Activated CD4-positive, alpha-beta memory T cell treated with anti-CD3 and anti-CD28 coated beads for 36 hours (primary cell): ENCODE measurements at regions of chr14 and their contacts with region 1.

Region 1: DNA sequence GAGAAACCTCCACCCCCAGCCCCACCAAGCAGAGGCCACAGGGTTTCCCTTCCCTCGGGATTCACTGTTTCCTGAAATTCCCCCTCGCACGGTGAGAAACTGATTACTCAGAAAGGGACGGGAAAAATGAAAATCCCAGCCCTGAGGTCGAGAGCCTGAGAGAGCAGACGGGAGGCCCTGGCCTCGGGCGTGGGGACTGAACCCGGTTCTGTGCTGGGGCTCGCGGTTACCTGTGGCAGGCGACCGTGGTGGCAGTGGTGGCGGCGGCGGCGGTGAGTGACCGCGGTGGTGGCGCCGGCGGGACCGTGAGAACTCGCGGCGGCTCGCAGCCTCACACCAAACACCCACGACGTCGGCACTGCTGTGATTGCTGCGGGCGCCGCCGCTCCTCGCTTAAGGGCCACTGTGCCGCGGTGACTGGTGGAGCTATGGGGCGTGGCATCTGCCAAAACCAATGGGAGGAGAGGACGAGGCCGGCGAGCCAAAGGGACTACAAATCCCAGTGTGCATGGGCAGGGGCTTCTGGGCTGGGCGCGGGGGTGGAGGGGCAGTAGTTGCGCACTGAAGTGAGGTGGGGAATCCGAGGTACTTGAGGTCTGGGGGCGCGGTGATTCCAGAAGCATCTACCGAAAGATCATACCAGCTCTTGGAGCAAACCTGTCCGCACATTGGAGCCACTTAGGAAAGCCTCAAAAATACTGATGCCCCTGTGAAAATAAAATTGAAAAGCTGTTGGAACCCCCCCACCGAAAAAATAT is at the start of gene LGMN:
- DNase-seq: peak; percentile 89
- H3K4me3 Mint-ChIP-seq: peak within 1 kb of the TSS; percentile 74
- H3K27ac Mint-ChIP-seq: no peak within 1 kb of the TSS
- H3K4me1 Mint-ChIP-seq: peaks cover 36% of the 10 kb centered on the region
- H3K27me3 Mint-ChIP-seq: peaks cover 48% of the 10 kb centered on the region
- total RNA-seq, gene LGMN: 9.2 to 10.2 TPM

Region 2: DNA sequence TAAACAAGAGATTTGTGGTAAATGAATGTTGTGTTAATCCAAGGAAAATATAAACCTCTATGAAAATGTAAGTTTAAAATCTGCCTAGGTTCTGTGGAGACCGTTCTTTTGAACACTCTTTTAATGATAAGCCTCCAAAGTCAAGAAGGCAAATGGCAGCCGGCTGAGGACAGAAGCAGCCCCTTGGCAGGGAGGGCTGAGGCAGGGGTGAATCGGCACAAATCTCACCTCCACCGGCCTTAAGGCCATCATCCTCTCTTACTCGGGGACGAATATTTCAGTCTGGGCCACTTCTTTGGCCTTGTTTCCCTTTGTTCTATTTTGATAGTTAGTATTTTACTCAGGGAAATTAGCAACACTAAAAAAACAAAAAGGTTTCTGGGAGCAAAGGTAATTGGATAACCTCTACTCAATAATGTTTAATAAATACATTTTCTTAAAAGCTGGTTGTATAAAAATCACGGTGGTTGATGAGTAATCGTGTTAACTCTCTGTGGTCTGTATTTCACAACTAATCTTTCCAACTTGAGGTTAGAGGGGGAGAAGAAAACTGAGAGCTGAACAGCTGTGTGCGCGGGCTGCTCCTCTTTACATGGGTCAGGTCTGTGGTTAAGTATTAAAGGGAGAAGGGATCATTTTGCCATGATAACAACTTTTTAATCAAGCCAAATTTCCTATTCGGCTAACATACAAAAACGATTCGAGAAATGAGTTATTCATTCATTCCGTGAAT is 18.6 kb before region 1 on chr14:
- CTCF ChIA-PET with region 1: interaction called, 3 read pairs
- POLR2A ChIA-PET with region 1: no interaction called
- intact Hi-C with region 1: loop called (anchors 2 kb)
- DNase-seq: peak; percentile 62
- H3K4me3 Mint-ChIP-seq: no peak overlapping the region
- H3K27ac Mint-ChIP-seq: peak overlapping the region; percentile 59
- H3K4me1 Mint-ChIP-seq: peaks cover 24% of the 10 kb centered on the region
- H3K27me3 Mint-ChIP-seq: peaks cover 22% of the 10 kb centered on the region

Region 3: DNA sequence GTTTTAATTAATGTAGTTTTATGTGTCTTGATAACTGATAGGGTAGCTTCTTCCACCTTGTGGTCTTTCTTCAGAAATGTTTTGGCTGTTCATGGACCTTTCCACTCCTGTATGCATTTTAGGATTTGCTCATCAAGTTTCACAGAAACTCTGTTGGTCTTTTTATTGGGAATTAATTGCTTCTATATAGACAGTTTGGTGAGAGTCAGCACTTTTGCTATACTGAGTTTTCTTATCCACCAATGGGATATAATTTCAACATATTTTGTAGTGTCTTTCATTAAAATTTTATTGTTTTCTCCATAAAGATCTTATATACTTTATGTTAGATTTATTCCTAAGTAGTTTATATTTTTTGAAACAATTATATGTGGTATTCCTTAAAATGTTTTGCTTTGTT is 53.5 kb after region 1 on chr14:
- CTCF ChIA-PET with region 1: no interaction called
- POLR2A ChIA-PET with region 1: no interaction called
- intact Hi-C with region 1: no loop called
- DNase-seq: no peak
- H3K4me3 Mint-ChIP-seq: no peak overlapping the region
- H3K27ac Mint-ChIP-seq: no peak overlapping the region
- H3K4me1 Mint-ChIP-seq: peaks cover 49% of the 10 kb centered on the region
- H3K27me3 Mint-ChIP-seq: no peaks in the 10 kb centered on the region